Activated T-helper 2 cell treated with anti-CD3 and anti-CD28 coated beads, Interferon-gamma antibody, Interleukin-2, Interleukin-4, amounts not matched to agents 10 μg/mL and 5 μg/mL and 100 μg/mL, durations not matched to agents 14 hours and 24 hours and 36 hours (primary cell): ENCODE measurements at regions of chr5 and their contacts with region 1.

Region 1: GRCh38 chr5:73298772-73299630 is 126.0 kb downstream of the TMEM174 start:
- DNase-seq: no peak
- H3K4me3 Mint-ChIP-seq: no peak overlapping the region
- H3K27ac Mint-ChIP-seq: no peak overlapping the region
- H3K4me1 Mint-ChIP-seq: peaks cover 2% of the 10 kb centered on the region
- H3K27me3 Mint-ChIP-seq: peaks cover 86% of the 10 kb centered on the region

Region 2: DNA sequence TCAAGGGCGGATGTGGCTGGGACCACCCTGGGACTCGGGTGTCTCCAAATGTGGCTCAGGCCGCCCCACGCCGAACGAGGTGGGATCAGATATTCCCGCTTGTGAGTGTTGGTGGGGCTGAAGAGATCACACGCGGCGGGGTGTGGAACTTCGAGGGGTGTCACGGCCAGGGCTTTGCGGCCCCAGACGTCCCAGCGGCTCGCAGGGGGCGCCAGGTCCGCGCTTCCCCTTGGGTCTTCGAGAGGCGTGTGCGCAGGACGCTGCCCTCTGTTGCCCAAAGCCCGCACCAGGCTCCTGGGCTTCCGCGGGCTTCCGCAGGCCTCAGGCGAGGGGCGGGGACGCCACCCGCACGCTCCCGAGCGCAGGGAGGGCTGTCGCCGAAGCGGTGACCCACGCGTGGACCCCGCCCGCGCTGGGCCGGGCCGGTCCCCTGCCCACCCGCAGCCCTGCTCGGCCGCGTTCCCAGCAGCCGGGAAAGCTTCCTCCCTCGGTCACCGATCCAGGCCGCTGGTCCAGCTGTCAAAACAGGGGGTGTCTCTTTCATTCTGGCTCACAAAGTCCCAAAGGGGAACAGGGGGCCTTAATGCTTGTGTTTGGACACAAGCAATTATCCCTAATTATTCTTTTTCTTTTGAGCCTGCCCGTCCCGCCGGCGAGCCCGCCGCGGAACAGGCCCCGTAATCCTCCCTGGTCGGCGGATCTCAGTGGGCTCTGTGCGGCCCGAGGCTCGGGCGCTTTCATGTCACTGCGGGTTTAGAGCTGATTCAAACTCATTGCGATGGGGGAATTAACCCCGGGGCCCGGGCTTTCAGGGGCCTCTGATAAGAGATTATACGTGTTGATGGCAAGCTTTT is 65.4 kb before region 1 on chr5:
- intact Hi-C with region 1: loop called (anchors 2 kb)
- DNase-seq: no peak
- H3K4me3 Mint-ChIP-seq: no peak overlapping the region
- H3K27ac Mint-ChIP-seq: no peak overlapping the region
- H3K4me1 Mint-ChIP-seq: peaks cover 1% of the 10 kb centered on the region
- H3K27me3 Mint-ChIP-seq: peaks cover 68% of the 10 kb centered on the region

Region 3: GRCh38 chr5:73381590-73382400 is 82.8 kb after region 1 on chr5:
- intact Hi-C with region 1: loop called (anchors 5 kb)
- DNase-seq: no peak
- H3K4me3 Mint-ChIP-seq: no peak overlapping the region
- H3K27ac Mint-ChIP-seq: no peak overlapping the region
- H3K4me1 Mint-ChIP-seq: peaks cover 3% of the 10 kb centered on the region
- H3K27me3 Mint-ChIP-seq: peaks cover 65% of the 10 kb centered on the region

Region 4: GRCh38 chr5:73437101-73437776 is 138.2 kb after region 1 on chr5:
- intact Hi-C with region 1: loop called (anchors 2 kb)
- DNase-seq: no peak
- H3K4me3 Mint-ChIP-seq: no peak overlapping the region
- H3K27ac Mint-ChIP-seq: no peak overlapping the region
- H3K4me1 Mint-ChIP-seq: peaks cover 3% of the 10 kb centered on the region
- H3K27me3 Mint-ChIP-seq: peaks cover 80% of the 10 kb centered on the region

Region 5: GRCh38 chr5:73448463-73449136 is 149.6 kb after region 1 on chr5 and contains the start of gene FOXD1:
- intact Hi-C with region 1: loop called (anchors 2 kb)
- DNase-seq: peak; percentile 31
- H3K4me3 Mint-ChIP-seq: peak within 1 kb of the TSS; percentile 76
- H3K27ac Mint-ChIP-seq: no peak within 1 kb of the TSS
- H3K4me1 Mint-ChIP-seq: peaks cover 6% of the 10 kb centered on the region
- H3K27me3 Mint-ChIP-seq: peaks cover 69% of the 10 kb centered on the region
- total RNA-seq, gene FOXD1: 0.11 and 0.25 TPM in 2 replicates

Region 6: DNA sequence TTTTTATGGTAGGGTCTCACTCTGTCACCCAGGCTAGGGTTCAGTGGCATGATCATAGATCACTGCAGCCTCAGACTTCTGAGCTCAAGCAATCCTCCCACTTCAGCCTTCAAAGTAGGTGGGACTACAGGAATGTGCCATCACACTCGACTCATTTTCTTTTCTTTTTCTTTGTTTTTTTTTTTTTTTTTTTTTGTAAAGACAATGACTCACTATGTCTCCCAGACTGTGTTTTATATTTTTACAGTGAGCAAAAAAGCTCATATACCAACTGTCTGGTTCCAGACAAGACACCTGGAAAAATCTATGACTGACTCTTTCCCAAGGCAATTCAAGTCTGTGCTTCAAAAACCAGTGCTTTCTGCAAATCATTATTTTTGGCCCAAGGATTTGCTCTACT is 160.4 kb after region 1 on chr5:
- intact Hi-C with region 1: no loop called
- DNase-seq: no peak
- H3K4me3 Mint-ChIP-seq: no peak overlapping the region
- H3K27ac Mint-ChIP-seq: no peak overlapping the region
- H3K4me1 Mint-ChIP-seq: no peaks in the 10 kb centered on the region
- H3K27me3 Mint-ChIP-seq: peaks cover 27% of the 10 kb centered on the region

Region 7: GRCh38 chr5:73701518-73701917 is 402.5 kb after region 1 on chr5:
- intact Hi-C with region 1: no loop called
- DNase-seq: no peak
- H3K4me3 Mint-ChIP-seq: no peak overlapping the region
- H3K27ac Mint-ChIP-seq: no peak overlapping the region
- H3K4me1 Mint-ChIP-seq: no peaks in the 10 kb centered on the region
- H3K27me3 Mint-ChIP-seq: peaks cover 22% of the 10 kb centered on the region